Colonic mucosa (tissue), 4 donors: ENCODE measurements at regions of chr2 and their contacts with region 1.

Region 1: GRCh38 chr2:187581125-187581896 is 27.1 kb upstream of the TFPI start:
- DNase-seq: peak; percentile 28
- H3K4me3 ChIP-seq: no peak overlapping the region
- H3K27ac ChIP-seq: no peak overlapping the region
- H3K4me1 ChIP-seq: no peaks in the 10 kb centered on the region
- H3K27me3 ChIP-seq: no peaks in the 10 kb centered on the region
- CTCF ChIP-seq: peak; percentile 49

Region 2: GRCh38 chr2:187349326-187349944 is 231.9 kb before region 1 on chr2:
- intact Hi-C with region 1: no loop called
- DNase-seq: no peak
- H3K4me3 ChIP-seq: no peak overlapping the region
- H3K27ac ChIP-seq: no peak overlapping the region
- H3K4me1 ChIP-seq: no peaks in the 10 kb centered on the region
- H3K27me3 ChIP-seq: no peaks in the 10 kb centered on the region
- CTCF ChIP-seq: no peak

Region 3: DNA sequence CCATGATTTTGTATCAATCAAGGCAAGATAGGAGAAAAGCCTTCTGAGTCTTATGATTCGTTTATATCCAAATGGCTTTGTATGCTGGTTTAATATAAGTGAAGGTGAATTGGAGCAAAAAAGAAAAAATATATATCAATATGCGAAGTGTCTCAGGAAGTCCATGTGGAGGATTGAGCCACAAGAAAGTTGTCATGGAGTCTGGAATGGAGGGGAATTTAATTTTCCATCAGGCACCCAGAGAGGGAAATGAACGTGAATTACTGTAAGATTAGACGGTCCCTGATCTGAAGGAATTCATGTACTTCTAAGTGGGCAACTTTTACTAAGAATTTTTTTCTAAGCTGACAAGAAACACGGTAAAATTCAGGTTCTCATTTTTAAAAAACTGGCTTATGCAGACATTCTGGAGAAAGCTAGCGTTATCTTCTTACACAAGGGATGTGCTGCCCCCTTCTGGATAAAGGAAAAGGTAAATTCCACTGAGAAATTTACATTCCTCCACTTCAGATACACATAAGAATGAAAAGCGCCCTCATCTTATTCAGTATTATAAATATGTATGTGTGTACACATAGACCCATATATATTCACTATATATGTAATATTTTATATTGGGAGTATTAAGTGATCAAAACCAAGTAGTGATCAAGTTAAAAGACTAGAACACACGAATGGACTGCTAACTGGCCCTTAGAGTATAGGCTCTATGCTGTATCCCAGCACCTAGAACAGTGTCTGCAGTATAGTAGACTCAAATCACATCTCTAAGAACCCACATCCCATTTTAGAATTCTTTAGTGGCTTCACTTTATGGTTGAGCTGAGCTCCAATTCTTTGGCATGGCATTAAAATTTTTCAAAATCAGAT is 261.9 kb after region 1 on chr2:
- intact Hi-C with region 1: loop called (anchors 5 kb)
- DNase-seq: no peak
- H3K4me3 ChIP-seq: no peak overlapping the region
- H3K27ac ChIP-seq: no peak overlapping the region
- H3K4me1 ChIP-seq: no peaks in the 10 kb centered on the region
- H3K27me3 ChIP-seq: no peaks in the 10 kb centered on the region
- CTCF ChIP-seq: peak; percentile 42

Region 4: GRCh38 chr2:188512456-188512855 is 931.1 kb after region 1 on chr2:
- intact Hi-C with region 1: loop called (anchors 5 kb)
- DNase-seq: no peak
- H3K4me3 ChIP-seq: no peak overlapping the region
- H3K27ac ChIP-seq: no peak overlapping the region
- H3K4me1 ChIP-seq: no peaks in the 10 kb centered on the region
- H3K27me3 ChIP-seq: no peaks in the 10 kb centered on the region
- CTCF ChIP-seq: peak; percentile 34